WTC11 (cell line): ENCODE measurements at regions of chr11 and their contacts with region 1.

Region 1: DNA sequence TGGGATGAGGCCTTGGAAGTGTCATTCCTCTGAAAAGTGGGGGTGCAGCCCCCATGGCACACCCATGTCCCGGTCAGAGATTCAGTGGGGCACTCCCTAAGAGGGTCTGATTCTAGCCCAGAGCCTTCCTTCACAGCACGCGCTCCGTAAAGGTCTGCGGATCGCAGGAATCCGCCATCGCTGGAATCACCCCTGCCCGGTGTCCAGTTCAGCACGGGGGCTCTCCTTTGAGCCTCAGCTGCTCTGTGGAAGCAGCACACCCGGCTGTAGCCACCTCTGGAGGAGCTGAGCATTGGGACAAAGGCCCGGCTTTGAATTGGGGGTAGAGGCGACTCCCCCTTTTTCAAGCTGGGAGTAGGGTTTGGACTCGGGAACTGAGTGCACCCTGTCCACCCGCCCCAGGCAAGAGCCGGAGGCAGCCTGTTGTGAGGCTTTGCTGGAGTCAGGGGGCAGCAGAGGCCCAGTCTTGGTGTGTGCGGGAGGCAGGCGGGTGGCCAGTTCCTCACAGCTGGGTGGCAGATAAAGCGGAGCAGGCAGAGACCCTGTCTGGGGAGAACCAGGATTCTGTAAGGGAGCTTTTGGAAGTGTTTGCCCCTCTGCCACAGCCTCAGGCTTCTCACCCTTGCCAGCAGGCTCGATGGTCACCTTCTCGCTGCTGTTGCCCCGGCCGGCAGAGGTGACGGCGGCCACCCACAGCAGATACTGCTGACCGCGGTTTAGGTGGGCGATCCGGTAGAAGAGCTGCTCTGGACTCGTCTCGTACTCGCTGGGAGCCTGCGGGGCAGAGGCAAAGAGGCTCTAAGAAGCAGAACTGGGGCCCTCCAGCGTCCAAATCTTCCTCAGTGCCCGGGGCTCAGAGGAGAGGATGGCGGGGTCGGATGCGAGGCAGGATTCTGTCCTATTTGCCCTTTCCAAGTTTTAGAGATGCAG is 115.9 kb downstream of the CEP164 start:
- DNase-seq: peak; percentile 84
- ATAC-seq: peak; percentile 95
- H3K4me3 Mint-ChIP-seq: no peak overlapping the region
- H3K27ac Mint-ChIP-seq: no peak overlapping the region
- H3K4me1 Mint-ChIP-seq: peaks cover 7% of the 10 kb centered on the region
- H3K27me3 Mint-ChIP-seq: no peaks in the 10 kb centered on the region
- CTCF ChIP-seq: peak; percentile 56; the same call in 1 of the 2 replicates

Region 2: DNA sequence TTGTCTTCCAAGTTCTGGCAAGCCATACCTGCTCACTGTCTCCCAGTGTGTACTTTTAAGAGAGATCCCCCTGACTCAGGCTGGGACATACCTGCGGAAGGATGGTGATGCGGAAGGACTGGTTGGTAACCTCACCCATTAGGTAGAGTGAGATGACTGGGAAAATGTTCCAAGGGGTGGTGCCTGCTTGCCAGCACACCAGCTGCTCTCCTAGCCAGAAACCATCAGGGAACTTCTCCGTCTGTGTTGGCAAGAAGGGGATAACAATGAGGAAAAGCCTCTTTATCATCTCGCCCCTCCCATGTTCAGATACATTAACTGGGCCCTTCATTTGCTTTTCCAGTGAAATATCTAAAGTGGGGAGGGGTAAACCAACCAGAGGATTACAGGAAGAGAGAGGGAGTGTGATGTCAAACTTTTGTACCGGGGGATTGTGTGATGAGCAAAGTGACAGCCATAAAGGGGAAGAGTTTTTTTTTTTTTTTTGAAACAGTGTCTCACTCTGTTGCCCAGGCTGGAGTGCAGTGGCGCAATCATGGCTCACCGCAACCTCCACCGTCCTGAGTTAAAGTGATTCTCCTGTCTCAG is 152.6 kb before region 1 on chr11 and contains the start of gene BACE1-AS:
- CTCF ChIA-PET with region 1: no interaction called
- POLR2A ChIA-PET with region 1: no interaction called
- DNase-seq: no peak
- ATAC-seq: no peak
- H3K4me3 Mint-ChIP-seq: no peak within 1 kb of the TSS
- H3K27ac Mint-ChIP-seq: no peak within 1 kb of the TSS; the same call in 1 of the 2 replicates
- H3K4me1 Mint-ChIP-seq: no peaks in the 10 kb centered on the region; the same call in 1 of the 2 replicates
- H3K27me3 Mint-ChIP-seq: no peaks in the 10 kb centered on the region
- CTCF ChIP-seq: no peak
- total RNA-seq, gene BACE1-AS: 12.2 to 15.7 TPM (median 13.8 TPM) in 3 replicates

Region 3: GRCh38 chr11:117468888-117469287 is 25.4 kb after region 1 on chr11:
- CTCF ChIA-PET with region 1: interaction called, 10 read pairs
- POLR2A ChIA-PET with region 1: no interaction called
- DNase-seq: peak; percentile 33
- ATAC-seq: peak; percentile 79
- H3K4me3 Mint-ChIP-seq: no peak overlapping the region
- H3K27ac Mint-ChIP-seq: no peak overlapping the region
- H3K4me1 Mint-ChIP-seq: peaks cover 20% of the 10 kb centered on the region
- H3K27me3 Mint-ChIP-seq: no peaks in the 10 kb centered on the region; the same call in 1 of the 2 replicates
- CTCF ChIP-seq: no peak

Region 4: GRCh38 chr11:117501237-117501898 is 57.8 kb after region 1 on chr11:
- CTCF ChIA-PET with region 1: interaction called, 10 read pairs
- POLR2A ChIA-PET with region 1: no interaction called
- DNase-seq: no peak
- ATAC-seq: no peak
- H3K4me3 Mint-ChIP-seq: no peak overlapping the region
- H3K27ac Mint-ChIP-seq: peak overlapping the region; percentile 32; the same call in 1 of the 2 replicates
- H3K4me1 Mint-ChIP-seq: peaks cover 19% of the 10 kb centered on the region
- H3K27me3 Mint-ChIP-seq: no peaks in the 10 kb centered on the region
- CTCF ChIP-seq: no peak

Region 5: DNA sequence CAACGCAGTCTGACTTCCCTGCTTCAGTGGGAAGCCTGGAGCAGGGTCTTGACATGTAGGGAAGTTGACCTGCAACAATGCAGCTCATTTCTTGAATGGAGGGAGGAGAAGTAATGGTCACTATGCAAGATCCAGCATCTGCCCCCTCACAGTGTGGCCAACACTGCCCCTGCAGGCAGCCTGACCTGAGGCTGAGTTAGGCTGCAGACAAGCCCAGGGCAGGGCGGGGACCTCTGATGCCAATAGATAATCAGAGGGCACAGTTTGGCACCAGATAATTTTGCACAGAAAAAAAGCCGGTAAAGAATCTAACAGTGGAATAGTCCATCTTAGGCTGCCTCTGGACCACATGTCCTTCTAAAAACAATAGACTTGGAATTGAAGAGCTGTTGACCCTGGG is 171.2 kb after region 1 on chr11:
- CTCF ChIA-PET with region 1: interaction called, 25 read pairs
- POLR2A ChIA-PET with region 1: no interaction called
- DNase-seq: peak; percentile 29
- ATAC-seq: peak; percentile 28; the same call in 1 of the 2 replicates
- H3K4me3 Mint-ChIP-seq: no peak overlapping the region
- H3K27ac Mint-ChIP-seq: no peak overlapping the region
- H3K4me1 Mint-ChIP-seq: peaks cover 53% of the 10 kb centered on the region
- H3K27me3 Mint-ChIP-seq: no peaks in the 10 kb centered on the region; the same call in 1 of the 2 replicates
- CTCF ChIP-seq: no peak

Region 6: DNA sequence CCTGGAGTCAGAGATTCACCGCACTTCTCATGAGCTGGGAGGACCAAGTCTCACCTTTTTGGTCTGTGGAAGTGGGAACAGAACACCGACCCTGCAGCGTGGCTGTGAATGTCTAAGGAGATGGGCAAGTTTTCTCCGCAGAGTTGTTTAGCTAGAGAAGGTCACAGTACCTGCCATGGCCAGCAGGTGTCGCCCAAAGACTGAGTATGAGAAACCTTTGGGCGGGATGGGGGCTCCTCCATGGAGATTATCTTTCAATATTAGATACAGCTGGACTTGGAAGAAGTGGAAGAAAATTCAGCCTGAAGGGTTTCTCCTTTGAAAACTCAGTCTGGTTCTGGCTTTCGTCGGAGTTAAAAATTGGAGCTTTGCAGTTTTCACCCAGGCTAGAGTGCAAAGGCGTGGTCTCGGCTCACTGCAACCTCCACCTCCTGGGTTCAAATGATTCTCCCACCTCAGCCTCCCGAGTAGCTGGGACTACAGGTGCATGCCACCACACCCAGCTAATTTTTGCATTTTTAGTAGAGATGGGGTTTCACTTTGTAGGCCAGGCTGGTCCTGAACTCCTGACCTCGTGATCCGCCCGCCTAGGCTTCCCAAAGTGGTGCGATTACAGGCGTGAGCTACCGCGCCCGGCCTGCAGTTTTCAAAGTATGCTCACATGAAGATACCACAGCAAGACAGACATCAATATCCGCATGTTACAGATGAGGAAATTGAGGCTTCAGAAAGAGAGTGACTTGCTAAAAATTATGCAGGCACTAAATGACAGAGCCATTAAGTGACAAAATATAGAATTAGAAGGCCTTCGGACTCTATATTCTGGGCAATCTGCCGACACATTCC is 364.2 kb after region 1 on chr11:
- CTCF ChIA-PET with region 1: interaction called, 17 read pairs
- POLR2A ChIA-PET with region 1: no interaction called
- DNase-seq: peak; percentile 85
- ATAC-seq: peak; percentile 69
- H3K4me3 Mint-ChIP-seq: no peak overlapping the region
- H3K27ac Mint-ChIP-seq: no peak overlapping the region
- H3K4me1 Mint-ChIP-seq: no peaks in the 10 kb centered on the region
- H3K27me3 Mint-ChIP-seq: peaks cover 8% of the 10 kb centered on the region
- CTCF ChIP-seq: peak; percentile 85